ENCODE measurements at regions of chr1 and their contacts with region 1.

Region 1: DNA sequence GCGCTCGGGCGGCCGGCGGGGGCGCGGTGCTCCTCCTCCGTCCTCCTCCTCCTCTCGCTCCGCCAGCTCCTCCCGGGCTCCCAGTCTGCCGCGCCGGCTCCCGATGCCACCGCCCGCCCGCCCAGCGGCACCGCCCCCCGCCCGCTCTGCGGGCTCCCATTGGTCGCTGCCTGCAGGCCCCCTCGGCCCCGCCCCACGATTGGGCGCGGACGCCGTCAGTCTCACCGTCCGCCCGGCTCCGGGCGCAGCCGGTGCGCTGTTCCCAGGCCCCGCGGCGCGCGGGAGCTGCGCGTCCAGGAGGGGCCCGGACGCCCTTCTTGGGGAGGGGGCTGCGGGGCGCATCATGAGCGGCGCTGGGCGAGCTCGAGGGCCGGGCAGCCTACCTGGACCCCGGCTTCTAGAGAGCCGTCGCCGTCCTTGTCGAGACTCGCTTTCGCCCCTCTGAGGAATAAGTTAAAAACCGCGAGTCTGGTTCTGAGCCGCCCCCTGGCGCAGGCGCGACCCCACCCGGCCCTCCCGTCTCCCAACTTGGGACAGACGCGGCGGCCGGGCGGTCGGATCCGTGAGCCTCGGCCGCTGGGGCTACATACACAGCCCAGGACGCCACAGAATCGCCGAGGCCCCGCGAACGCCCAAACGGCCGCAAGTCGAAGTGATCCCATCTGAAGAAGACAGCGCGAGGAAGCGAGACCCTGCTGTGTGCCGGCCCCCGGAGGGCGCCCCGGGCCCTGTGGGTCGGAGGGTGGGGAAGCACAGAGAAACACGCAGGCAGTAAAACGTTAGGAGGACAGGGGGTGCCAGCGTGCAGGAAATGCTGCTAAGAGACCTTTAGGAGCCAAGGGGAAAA is at the start of gene SIPA1L2:
- DNase-seq: peak; percentile 88
- H3K4me3 ChIP-seq: peak within 1 kb of the TSS; percentile 64 to 83 (median 77)
- H3K27ac ChIP-seq: no peak within 1 kb of the TSS
- H3K4me1 ChIP-seq: peaks cover 16% of the 10 kb centered on the region
- H3K27me3 ChIP-seq: no peaks in the 10 kb centered on the region
- CTCF ChIP-seq: peak; percentile 37 to 74
- total RNA-seq, gene SIPA1L2: 3.8 to 19.8 TPM

Region 2: GRCh38 chr1:231707407-231707806 is 922.9 kb before region 1 on chr1:
- CTCF ChIA-PET with region 1: interaction called, 18 read pairs
- dilution Hi-C with region 1: no loop called
- in situ Hi-C with region 1: no loop called
- intact Hi-C with region 1: no loop called
- DNase-seq: no peak
- H3K4me3 ChIP-seq: no peak overlapping the region
- H3K27ac ChIP-seq: no peak overlapping the region
- H3K4me1 ChIP-seq: no peaks in the 10 kb centered on the region
- H3K27me3 ChIP-seq: no peaks in the 10 kb centered on the region
- CTCF ChIP-seq: no peak

Region 3: GRCh38 chr1:231806623-231807495 is 823.4 kb before region 1 on chr1:
- CTCF ChIA-PET with region 1: no interaction called
- dilution Hi-C with region 1: no loop called
- in situ Hi-C with region 1: no loop called
- intact Hi-C with region 1: loop called (anchors 5 kb)
- DNase-seq: peak; percentile 34
- H3K4me3 ChIP-seq: no peak overlapping the region
- H3K27ac ChIP-seq: no peak overlapping the region
- H3K4me1 ChIP-seq: peaks cover 6% of the 10 kb centered on the region
- H3K27me3 ChIP-seq: no peaks in the 10 kb centered on the region
- CTCF ChIP-seq: peak; percentile 52 to 70

Region 4: DNA sequence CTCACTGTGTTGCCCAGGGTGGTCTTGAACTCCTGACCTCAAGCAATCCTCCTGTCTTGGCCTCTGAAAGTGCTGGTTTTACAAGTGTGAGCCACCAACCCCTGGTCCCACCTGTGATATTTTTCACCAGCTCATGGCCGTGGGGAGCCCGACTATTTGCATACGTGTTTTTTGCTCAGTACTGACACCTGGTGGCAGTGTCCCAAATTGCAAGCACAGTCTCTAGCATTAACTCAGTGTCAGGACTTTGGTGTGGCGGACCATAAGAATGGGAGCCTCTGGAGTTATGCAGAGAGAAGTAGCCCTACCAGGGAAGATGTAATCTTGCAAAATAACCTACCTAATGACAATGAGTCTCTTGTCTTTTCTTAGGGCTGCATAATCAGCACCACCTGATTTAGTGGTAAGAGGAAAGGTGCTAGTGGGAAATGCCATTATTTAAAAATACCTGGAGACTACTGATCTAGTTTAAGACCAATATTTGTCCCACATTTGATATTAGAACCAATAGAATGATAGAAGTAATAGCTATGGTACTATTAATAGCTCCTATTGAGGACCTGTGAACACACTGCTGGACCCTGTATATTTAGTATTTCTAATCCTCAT is 698.3 kb before region 1 on chr1:
- CTCF ChIA-PET with region 1: interaction called, 3 read pairs
- dilution Hi-C with region 1: no loop called
- in situ Hi-C with region 1: no loop called
- intact Hi-C with region 1: loop called (anchors 1 kb)
- DNase-seq: no peak
- H3K4me3 ChIP-seq: no peak overlapping the region
- H3K27ac ChIP-seq: peak overlapping the region; percentile 57
- H3K4me1 ChIP-seq: peaks cover 26% of the 10 kb centered on the region
- H3K27me3 ChIP-seq: no peaks in the 10 kb centered on the region
- CTCF ChIP-seq: peak; percentile 58 to 76

Region 5: GRCh38 chr1:232306269-232306961 is 323.9 kb before region 1 on chr1:
- CTCF ChIA-PET with region 1: no interaction called
- dilution Hi-C with region 1: no loop called
- in situ Hi-C with region 1: no loop called
- intact Hi-C with region 1: loop called (anchors 10 kb)
- DNase-seq: no peak
- H3K4me3 ChIP-seq: no peak overlapping the region
- H3K27ac ChIP-seq: no peak overlapping the region
- H3K4me1 ChIP-seq: no peaks in the 10 kb centered on the region
- H3K27me3 ChIP-seq: no peaks in the 10 kb centered on the region
- CTCF ChIP-seq: peak; percentile 18 to 38

Region 6: DNA sequence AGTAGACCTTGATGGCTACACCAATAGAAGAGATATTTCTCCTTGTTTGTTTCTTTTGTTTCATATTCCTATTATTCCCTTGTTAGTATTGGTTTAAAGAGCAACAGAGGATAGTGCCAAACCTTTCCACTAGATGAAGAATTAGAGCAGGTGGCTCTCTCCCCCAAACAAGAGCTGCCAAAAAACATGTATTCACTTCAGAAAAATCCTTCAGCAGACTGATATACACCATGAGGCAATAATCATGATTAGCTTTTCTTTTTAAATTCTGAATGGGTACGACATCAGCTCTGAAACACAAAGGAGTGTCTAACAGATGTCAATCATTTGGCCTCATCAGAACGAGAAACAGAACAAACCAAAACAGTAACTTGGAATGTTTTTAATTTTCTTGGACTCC is 107.6 kb after region 1 on chr1:
- CTCF ChIA-PET with region 1: no interaction called
- dilution Hi-C with region 1: no loop called
- in situ Hi-C with region 1: no loop called
- intact Hi-C with region 1: no loop called
- DNase-seq: no peak
- H3K4me3 ChIP-seq: no peak overlapping the region
- H3K27ac ChIP-seq: no peak overlapping the region
- H3K4me1 ChIP-seq: no peaks in the 10 kb centered on the region
- H3K27me3 ChIP-seq: no peaks in the 10 kb centered on the region
- CTCF ChIP-seq: no peak

Region 7: DNA sequence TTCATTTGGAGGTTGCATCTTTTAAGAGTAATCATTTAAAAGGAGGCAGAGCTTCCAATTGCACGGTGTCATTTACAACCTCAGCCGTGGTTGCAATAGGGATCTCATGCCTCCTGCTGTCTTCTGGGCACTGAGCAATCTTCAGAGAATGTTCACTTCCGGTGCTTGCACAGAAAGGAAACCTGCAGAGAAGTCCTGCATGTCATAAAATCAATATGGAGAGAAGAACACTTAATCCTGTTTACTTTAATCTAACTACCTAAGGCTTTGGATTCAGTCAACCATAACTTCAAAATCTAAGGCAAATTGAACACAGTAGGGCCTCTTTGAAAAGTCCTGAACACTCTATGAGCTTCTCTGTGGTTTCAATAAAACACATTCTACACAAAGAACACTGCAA is 163.7 kb after region 1 on chr1:
- CTCF ChIA-PET with region 1: interaction called, 3 read pairs
- dilution Hi-C with region 1: no loop called
- in situ Hi-C with region 1: loop called in 1 of 2 experiments (anchors 10 kb)
- intact Hi-C with region 1: loop called (anchors 1 kb)
- DNase-seq: peak; percentile 47
- H3K4me3 ChIP-seq: no peak overlapping the region
- H3K27ac ChIP-seq: no peak overlapping the region
- H3K4me1 ChIP-seq: no peaks in the 10 kb centered on the region
- H3K27me3 ChIP-seq: peaks cover 1% of the 10 kb centered on the region
- CTCF ChIP-seq: peak in 1 of 2 donors; percentile 51

Region 8: DNA sequence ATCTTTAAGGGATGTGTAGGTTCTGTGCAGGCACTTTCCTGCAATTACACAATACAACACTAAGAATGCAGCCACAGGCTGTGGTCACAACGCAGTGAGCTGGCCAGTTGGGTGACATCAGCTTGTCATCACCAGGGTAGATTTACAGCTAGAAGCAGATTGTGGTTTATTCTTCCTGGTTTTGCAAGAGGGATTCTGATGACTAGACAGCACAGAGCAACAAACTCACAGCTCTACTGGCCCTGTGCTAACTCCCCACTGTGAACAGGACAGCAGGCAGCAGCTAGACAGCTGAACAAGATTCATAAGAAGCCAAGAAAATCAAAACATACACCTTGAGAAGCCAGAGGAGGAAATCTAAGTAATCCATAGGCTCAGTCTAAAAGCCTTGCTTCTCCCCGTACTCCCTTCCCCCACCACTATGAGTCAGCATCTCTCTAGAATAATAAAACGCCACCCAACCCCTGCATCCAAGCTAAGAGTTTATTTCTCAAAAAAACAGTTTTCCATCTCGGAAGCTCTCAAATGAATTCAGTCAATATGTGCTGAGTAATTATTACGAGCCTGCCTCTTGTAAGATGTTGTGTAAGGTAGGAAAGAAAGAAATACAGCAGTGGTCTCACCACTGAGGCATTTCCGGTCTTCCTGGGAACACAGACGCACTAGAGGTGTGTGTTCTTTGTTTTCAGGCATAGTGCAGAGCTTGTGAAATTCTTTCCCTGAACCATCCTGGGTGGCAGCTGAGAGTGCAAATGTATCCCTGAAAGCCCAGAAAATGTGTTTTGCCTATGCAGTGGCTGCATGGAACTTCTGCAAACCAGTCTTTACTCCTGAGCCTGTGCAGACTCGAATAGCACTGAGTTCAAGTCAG is 483.0 kb after region 1 on chr1:
- CTCF ChIA-PET with region 1: no interaction called
- dilution Hi-C with region 1: no loop called
- in situ Hi-C with region 1: loop called in 1 of 2 experiments (anchors 25 kb)
- intact Hi-C with region 1: loop called (anchors 10 kb)
- DNase-seq: peak; percentile 99
- H3K4me3 ChIP-seq: peak overlapping the region in 2 of 3 experiments; percentile 2 to 37
- H3K27ac ChIP-seq: peak overlapping the region; percentile 100
- H3K4me1 ChIP-seq: peaks cover 38% of the 10 kb centered on the region
- H3K27me3 ChIP-seq: no peaks in the 10 kb centered on the region
- CTCF ChIP-seq: no peak